ENCODE measurements at regions of chr5 and their contacts with region 1.

Region 1: GRCh38 chr5:141677415-141677814 is 4.6 kb downstream of the ARAP3 start:
- ATAC-seq: no peak
- H3K4me3 ChIP-seq: no peak overlapping the region
- H3K27ac ChIP-seq: no peak overlapping the region
- H3K4me1 ChIP-seq: peaks cover 43 to 49% of the 10 kb centered on the region in 2 donors

Region 2: DNA sequence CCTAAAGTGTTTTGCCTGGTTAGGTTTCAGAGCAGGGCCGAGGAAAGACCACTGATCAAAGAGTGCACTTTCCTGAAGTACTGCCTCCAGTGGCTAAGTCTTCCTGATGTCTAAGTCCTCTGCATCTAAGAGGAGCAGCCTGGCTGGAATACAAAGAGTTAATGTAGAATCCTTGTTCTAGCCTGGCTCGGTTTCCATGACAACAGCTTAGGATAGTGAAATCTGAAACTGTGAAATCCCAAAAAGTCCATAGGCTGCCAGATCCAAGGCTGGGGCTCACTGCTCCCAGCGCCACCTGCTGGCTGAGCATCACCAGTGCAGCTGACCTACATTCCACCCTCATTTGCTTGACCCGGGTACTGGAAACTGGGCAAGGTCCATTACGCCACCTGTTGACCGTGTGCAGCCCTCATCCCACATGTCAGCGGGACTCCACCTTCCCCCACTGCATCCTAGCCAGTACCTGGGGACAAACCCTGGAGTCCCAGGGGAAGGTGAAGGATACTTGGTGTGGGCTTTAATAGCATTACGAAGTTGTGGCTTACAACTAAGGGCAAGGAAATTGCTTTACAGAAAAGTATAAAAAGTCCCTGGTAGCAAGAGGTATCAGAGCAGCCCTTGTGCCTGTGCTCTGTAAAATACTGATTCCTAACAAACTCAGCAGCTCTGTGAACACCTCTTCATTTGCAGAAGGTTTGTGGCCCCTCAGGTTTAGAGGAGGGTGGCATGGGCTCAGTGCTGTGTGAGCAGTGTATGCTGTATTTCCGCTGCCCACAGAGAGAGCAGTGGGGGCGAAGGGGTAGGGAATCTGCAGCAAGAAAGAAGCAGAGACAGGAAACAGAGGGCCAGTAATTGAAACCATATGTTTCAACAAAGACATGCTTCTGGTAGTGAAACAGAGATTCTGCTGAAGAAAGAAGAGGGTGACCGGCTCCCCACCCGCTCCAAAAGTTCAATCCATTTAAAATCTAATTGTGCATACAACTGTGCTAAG is 152.5 kb before region 1 on chr5:
- in situ Hi-C with region 1: no loop called
- ATAC-seq: peak; percentile 48 to 93 (median 85)
- H3K4me3 ChIP-seq: no peak overlapping the region
- H3K27ac ChIP-seq: no peak overlapping the region
- H3K4me1 ChIP-seq: peaks cover 23 to 27% of the 10 kb centered on the region in 2 donors

Region 3: GRCh38 chr5:141951332-141951781 is 273.9 kb after region 1 on chr5:
- in situ Hi-C with region 1: loop called in 5 of 9 experiments (anchors 10 to 25 kb)
- ATAC-seq: peak in 6 of 8 experiments; percentile 36 to 70 (median 51)
- H3K4me3 ChIP-seq: no peak overlapping the region
- H3K27ac ChIP-seq: no peak overlapping the region
- H3K4me1 ChIP-seq: peaks cover 0 to 2% of the 10 kb centered on the region in 2 donors

Region 4: DNA sequence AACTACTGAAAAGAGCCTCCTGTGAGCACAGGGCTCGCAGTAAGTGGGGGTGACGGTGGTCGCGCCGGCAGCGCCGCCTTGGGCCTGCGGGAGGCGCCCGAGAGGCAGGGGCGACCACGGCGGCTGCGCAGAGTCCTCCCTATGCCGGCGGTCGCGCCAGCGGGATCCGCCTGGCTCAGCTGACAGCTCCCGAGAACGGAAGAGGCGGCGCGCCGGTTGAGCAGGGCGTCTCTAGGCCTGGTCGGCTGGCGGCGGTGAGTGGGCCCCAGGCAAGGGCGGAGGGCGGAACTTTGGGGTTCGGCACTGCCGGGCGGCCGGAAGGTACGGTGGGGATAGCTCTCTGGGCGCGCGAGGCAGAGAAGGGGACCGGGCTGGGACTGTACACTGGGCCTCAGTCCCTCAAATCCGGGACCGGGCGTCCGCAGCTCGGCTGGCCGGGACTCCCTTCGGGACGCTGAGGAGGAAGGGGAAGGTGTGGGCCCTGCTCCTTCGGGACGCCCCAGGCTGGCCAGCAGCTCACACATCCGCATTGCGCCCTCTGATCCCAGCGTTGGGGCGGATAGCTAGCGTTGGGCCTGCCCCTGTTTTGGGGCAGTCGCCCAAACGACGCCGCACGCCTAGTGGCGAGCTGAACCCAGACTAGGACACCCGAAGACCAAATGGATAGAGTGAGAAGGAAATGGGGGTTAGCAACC is 291.6 kb after region 1 on chr5 and contains the start of gene RNF14:
- in situ Hi-C with region 1: loop called in 2 of 9 experiments (anchors 10 to 25 kb)
- ATAC-seq: peak; percentile 88 to 99 (median 98)
- H3K4me3 ChIP-seq: peak within 1 kb of the TSS; percentile 47 to 74 (median 67)
- H3K27ac ChIP-seq: peak within 1 kb of the TSS; percentile 59 to 89
- H3K4me1 ChIP-seq: peaks cover 10 to 19% of the 10 kb centered on the region in 2 donors
- total RNA-seq, gene RNF14: 28.8 to 84.2 (median 51.6) TPM